Gastrocnemius medialis (tissue), 4 donors: ENCODE measurements at regions of chr15 and their contacts with region 1.

Region 1: DNA sequence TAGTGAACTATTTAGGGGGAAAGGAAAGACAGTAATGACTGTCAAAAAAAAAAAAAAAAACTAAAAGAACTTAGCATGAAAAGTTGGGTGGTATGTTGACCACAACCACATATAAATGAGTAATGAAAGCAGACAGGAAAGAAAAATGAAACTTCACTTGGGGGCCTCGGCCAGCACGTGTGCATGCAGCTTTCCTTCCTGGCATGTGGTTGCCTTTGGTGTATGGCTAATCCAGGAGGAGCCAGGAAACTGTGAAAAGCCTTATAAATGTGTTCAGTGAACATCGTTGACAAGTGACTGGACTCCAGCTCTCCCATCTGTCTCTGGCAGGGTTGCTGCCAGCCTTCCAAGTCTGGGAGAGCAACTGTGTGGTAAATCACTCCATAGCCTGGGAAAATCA is 195.1 kb downstream of the DTWD1 start:
- DNase-seq: no peak
- ATAC-seq: no peak
- H3K4me3 ChIP-seq: no peak overlapping the region
- H3K27ac ChIP-seq: no peak overlapping the region
- H3K4me1 ChIP-seq: no peaks in the 10 kb centered on the region
- H3K27me3 ChIP-seq: no peaks in the 10 kb centered on the region
- CTCF ChIP-seq: no peak
- POLR2A ChIP-seq: no peak

Region 2: DNA sequence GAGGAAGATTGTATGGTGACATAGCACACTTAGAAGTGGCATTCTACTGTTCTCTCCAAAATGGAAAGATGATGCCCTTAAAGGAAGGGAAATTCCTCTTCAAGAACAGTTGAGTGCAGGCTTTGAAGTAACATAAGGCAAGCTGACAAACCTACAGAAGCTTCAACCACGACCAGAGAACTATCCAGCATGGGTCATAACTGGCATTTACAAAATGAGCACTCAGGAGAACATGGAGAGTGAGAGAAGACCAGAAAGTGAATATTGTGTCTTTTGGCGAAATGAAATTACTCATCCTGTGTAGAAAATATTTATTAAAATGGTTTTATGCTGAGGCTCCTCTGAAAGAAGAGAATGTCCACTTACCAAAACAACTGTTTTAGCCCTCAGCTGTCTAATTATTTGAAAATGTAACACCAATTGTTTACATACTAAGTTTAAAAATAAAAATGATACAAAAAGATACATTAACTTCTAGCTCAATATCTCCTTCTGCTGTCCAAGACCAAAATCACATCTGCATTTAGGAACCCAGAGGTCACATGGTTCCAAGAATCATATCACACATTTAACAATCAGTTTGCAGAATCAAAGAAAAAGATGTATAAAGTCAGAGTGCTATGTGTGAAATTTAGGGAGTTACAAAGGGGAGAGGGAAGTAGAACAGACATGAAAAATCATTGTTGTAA is 86.2 kb after region 1 on chr15:
- in situ Hi-C with region 1: loop called in 1 of 4 experiments (anchors 25 kb)
- intact Hi-C with region 1: no loop called
- DNase-seq: no peak
- ATAC-seq: peak in 1 of 2 donors; percentile 21
- H3K4me3 ChIP-seq: no peak overlapping the region
- H3K27ac ChIP-seq: peak overlapping the region; percentile 47 to 60 (median 50)
- H3K4me1 ChIP-seq: no peaks in the 10 kb centered on the region
- H3K27me3 ChIP-seq: no peaks in the 10 kb centered on the region
- CTCF ChIP-seq: no peak
- POLR2A ChIP-seq: no peak

Region 3: GRCh38 chr15:49989498-49989897 is 173.5 kb after region 1 on chr15:
- in situ Hi-C with region 1: no loop called
- intact Hi-C with region 1: no loop called
- DNase-seq: no peak
- ATAC-seq: peak in 1 of 2 donors; percentile 44
- H3K4me3 ChIP-seq: no peak overlapping the region
- H3K27ac ChIP-seq: peak overlapping the region in 1 of 4 donors; percentile 43
- H3K4me1 ChIP-seq: peaks cover 0 to 11% of the 10 kb centered on the region in 2 donors
- H3K27me3 ChIP-seq: no peaks in the 10 kb centered on the region
- CTCF ChIP-seq: no peak
- POLR2A ChIP-seq: no peak